ENCODE measurements at regions of chr19 and their contacts with region 1.

Region 1: GRCh38 chr19:19663256-19664038 is at the start of gene ATP13A1:
- DNase-seq: peak; percentile 100
- H3K4me3 ChIP-seq: peak within 1 kb of the TSS; percentile 92 to 100 (median 96)
- H3K27ac ChIP-seq: peak within 1 kb of the TSS; percentile 78 to 97 (median 95)
- H3K4me1 ChIP-seq: peaks cover 21 to 81% (median 47%) of the 10 kb centered on the region in 6 donors
- H3K27me3 ChIP-seq: no peaks in the 10 kb centered on the region
- CTCF ChIP-seq: peak in 3 of 11 experiments; percentile 9 to 37 (median 25)
- POLR2A ChIP-seq: peak in 2 of 3 donors; percentile 16 to 72
- total RNA-seq, gene ATP13A1: 88.4 to 301 (median 113) TPM

Region 2: GRCh38 chr19:19732579-19733501 is 69.4 kb after region 1 on chr19 and contains the start of gene ZNF14:
- intact Hi-C with region 1: loop called (anchors 10 kb)
- DNase-seq: peak; percentile 95
- H3K4me3 ChIP-seq: peak within 1 kb of the TSS; percentile 66 to 97 (median 83)
- H3K27ac ChIP-seq: peak within 1 kb of the TSS; percentile 61 to 89 (median 84)
- H3K4me1 ChIP-seq: peaks cover 0 to 40% (median 17%) of the 10 kb centered on the region in 6 donors
- H3K27me3 ChIP-seq: no peaks in the 10 kb centered on the region
- CTCF ChIP-seq: peak in 4 of 11 experiments; percentile 0 to 15 (median 10)
- POLR2A ChIP-seq: peak; percentile 61 to 76 (median 73)
- total RNA-seq, gene ZNF14: 8.0 to 17.1 (median 11.5) TPM